ENCODE measurements at regions of chr11 and their contacts with region 1.

Region 1: GRCh38 chr11:119323538-119324033 is 6.7 kb upstream of the MCAM start:
- DNase-seq: peak; percentile 90
- H3K4me3 Mint-ChIP-seq: no peak overlapping the region
- H3K27ac Mint-ChIP-seq: no peak overlapping the region
- H3K4me1 Mint-ChIP-seq: peaks cover 20% of the 10 kb centered on the region
- H3K27me3 Mint-ChIP-seq: peaks cover 3% of the 10 kb centered on the region

Region 2: GRCh38 chr11:119168471-119169281 is 154.9 kb before region 1 on chr11 and contains the start of gene NLRX1:
- CTCF ChIA-PET with region 1: interaction called, 11 read pairs
- POLR2A ChIA-PET with region 1: no interaction called
- intact Hi-C with region 1: loop called (anchors 5 kb)
- DNase-seq: peak; percentile 91
- H3K4me3 Mint-ChIP-seq: peak within 1 kb of the TSS; percentile 89
- H3K27ac Mint-ChIP-seq: peak within 1 kb of the TSS; percentile 82
- H3K4me1 Mint-ChIP-seq: peaks cover 11% of the 10 kb centered on the region
- H3K27me3 Mint-ChIP-seq: no peaks in the 10 kb centered on the region
- total RNA-seq, gene NLRX1: 18.4 to 18.7 TPM

Region 3: DNA sequence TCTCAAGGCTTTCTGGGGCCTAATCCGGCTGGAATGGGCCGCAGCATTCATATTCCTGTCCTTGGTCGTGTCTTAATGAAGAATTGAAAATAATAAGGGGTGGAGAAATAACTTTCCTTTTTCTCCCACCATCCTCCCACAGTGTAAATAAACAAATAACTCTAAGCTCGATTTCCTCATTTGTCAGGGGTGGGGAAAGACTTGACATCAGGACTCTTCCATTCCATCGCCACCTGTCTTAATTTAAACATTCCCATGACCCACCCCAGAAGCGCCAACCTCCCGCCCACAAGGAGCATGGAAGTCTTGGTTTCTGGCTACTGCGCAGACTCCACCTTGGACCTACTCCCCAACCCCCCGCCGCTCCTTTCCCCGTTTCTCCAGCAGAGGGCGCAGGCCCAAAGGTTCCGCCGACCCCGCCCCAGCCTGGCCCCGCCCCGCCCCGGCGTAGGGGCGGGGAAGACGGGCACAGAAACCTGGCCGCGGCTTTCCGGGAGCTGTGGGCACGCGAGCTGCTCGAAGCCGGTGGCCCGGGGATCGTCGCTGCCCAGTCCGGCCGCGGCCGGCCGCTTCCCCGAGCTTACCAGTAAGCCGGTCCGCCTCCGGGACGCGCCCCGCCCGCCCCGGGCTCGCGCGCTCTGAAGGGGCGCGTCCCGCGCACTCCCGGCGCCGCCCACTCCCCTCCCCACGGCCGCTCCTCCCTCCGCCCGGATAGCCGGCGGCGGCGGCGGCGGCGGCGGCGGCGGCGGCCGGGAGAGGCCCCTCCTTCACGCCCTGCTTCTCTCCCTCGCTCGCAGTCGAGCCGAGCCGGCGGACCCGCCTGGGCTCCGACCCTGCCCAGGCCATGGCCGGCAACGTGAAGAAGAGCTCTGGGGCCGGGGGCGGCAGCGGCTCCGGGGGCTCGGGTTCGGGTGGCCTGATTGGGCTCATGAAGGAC is 117.7 kb before region 1 on chr11 and contains the start of gene CBL:
- CTCF ChIA-PET with region 1: interaction called, 62 read pairs
- POLR2A ChIA-PET with region 1: interaction called, 4 read pairs
- intact Hi-C with region 1: loop called (anchors 1 kb)
- DNase-seq: peak; percentile 98
- H3K4me3 Mint-ChIP-seq: peak within 1 kb of the TSS; percentile 91
- H3K27ac Mint-ChIP-seq: peak within 1 kb of the TSS; percentile 85
- H3K4me1 Mint-ChIP-seq: peaks cover 25% of the 10 kb centered on the region
- H3K27me3 Mint-ChIP-seq: no peaks in the 10 kb centered on the region
- total RNA-seq, gene CBL: 30.8 to 31.2 TPM

Region 4: GRCh38 chr11:119356349-119357031 is 32.9 kb after region 1 on chr11:
- CTCF ChIA-PET with region 1: interaction called, 24 read pairs
- POLR2A ChIA-PET with region 1: no interaction called
- intact Hi-C with region 1: loop called (anchors 5 kb)
- DNase-seq: peak; percentile 83
- H3K4me3 Mint-ChIP-seq: peak overlapping the region; percentile 74
- H3K27ac Mint-ChIP-seq: no peak overlapping the region
- H3K4me1 Mint-ChIP-seq: peaks cover 15% of the 10 kb centered on the region
- H3K27me3 Mint-ChIP-seq: peaks cover 24% of the 10 kb centered on the region

Region 5: GRCh38 chr11:119474682-119475596 is 151.4 kb after region 1 on chr11:
- CTCF ChIA-PET with region 1: interaction called, 18 read pairs
- POLR2A ChIA-PET with region 1: no interaction called
- intact Hi-C with region 1: no loop called
- DNase-seq: peak; percentile 72
- H3K4me3 Mint-ChIP-seq: no peak overlapping the region
- H3K27ac Mint-ChIP-seq: no peak overlapping the region
- H3K4me1 Mint-ChIP-seq: no peaks in the 10 kb centered on the region
- H3K27me3 Mint-ChIP-seq: peaks cover 14% of the 10 kb centered on the region

Measured in activated CD4-positive, alpha-beta memory T cell treated with anti-CD3 and anti-CD28 coated beads for 36 hours (primary cell).